ENCODE measurements at regions of chr4 and their contacts with region 1.

Region 1: GRCh38 chr4:111641955-111642579 is 503.2 kb upstream of the FAM241A start:
- DNase-seq: peak; percentile 52
- H3K4me3 ChIP-seq: no peak overlapping the region
- H3K27ac ChIP-seq: no peak overlapping the region
- H3K4me1 ChIP-seq: no peaks in the 10 kb centered on the region
- H3K27me3 ChIP-seq: no peaks in the 10 kb centered on the region
- CTCF ChIP-seq: peak; percentile 67 to 76 (median 72)
- EP300 ChIP-seq: no peak
- POLR2A ChIP-seq: no peak

Region 2: GRCh38 chr4:110631584-110632505 is 1010.2 kb before region 1 on chr4:
- in situ Hi-C with region 1: loop called in 1 of 4 experiments (anchors 25 kb)
- intact Hi-C with region 1: no loop called
- DNase-seq: peak; percentile 70
- H3K4me3 ChIP-seq: peak overlapping the region in 2 of 4 donors; percentile 6 to 38
- H3K27ac ChIP-seq: no peak overlapping the region
- H3K4me1 ChIP-seq: peaks cover 0 to 33% (median 23%) of the 10 kb centered on the region in 4 donors
- H3K27me3 ChIP-seq: peaks cover 100% of the 10 kb centered on the region
- CTCF ChIP-seq: peak; percentile 54 to 93 (median 69)
- EP300 ChIP-seq: no peak
- POLR2A ChIP-seq: no peak

Region 3: DNA sequence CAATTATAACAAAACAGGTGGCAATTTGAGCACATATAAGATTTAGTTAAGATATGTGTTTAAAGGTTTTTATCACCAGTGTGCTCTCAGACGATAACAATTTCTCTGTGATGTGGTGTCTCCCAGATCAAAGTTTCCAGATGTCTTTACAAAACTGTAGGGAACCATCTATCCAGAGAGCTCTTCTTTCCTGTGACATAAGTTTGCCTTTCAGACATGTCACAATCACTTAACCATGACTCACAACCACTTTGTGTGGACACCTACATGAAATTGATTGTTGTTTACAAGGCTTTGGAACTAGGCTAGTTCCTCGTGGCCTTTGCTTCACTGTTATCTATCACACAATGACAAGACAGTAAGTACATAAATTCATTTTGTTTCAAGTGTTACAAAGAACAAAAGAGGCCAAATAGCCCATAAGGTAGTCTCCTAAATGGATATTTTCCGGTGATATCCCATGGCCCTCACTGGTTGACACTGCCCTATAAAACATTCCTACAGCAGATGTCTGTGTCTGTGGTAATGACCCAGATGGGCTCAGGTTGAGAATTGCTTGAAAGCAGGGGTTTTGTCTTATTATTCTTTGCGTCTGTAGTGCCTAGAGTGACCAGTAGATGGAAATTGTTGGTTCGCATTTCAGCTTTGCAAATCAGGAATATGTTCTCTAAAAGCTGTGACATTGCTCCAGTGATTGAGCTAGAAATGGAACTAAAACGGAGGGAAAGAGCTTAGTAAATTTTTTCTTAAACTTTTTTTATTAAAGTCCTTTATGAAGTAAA is 205.4 kb after region 1 on chr4:
- in situ Hi-C with region 1: loop called in 3 of 4 experiments (anchors 10 to 25 kb)
- intact Hi-C with region 1: loop called (anchors 2 kb)
- DNase-seq: no peak
- H3K4me3 ChIP-seq: no peak overlapping the region
- H3K27ac ChIP-seq: no peak overlapping the region
- H3K4me1 ChIP-seq: no peaks in the 10 kb centered on the region
- H3K27me3 ChIP-seq: no peaks in the 10 kb centered on the region
- CTCF ChIP-seq: no peak
- EP300 ChIP-seq: no peak
- POLR2A ChIP-seq: no peak

Region 4: DNA sequence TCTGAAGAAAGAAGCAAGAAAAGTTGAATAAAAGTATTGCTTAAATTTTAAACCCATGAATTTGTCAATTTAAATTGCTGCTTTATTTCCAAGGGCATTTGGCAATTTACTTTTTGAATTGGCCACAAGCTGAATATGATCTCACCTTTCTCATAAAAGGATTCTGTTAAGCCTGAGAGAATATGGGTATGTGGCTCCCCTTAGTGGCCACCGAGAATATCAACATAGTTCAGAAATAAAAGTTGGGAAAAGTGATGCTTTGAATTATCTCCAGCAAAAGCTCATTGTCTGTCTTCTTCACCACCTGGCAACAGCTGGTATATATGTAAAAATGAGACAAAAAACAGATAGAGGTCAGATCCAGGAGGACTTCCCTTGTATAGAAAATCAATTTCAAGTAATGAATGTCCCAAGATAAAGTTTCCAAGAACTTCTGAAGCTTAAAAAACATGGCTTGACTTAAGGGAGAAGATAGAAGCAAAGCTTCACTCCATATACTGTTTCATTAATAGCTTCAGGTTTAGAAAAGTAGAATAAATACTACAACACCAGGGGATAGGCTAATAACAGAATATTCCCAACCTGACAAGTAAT is 212.5 kb after region 1 on chr4:
- in situ Hi-C with region 1: loop called in 3 of 4 experiments (anchors 10 to 25 kb)
- intact Hi-C with region 1: no loop called
- DNase-seq: peak; percentile 11
- H3K4me3 ChIP-seq: no peak overlapping the region
- H3K27ac ChIP-seq: no peak overlapping the region
- H3K4me1 ChIP-seq: peaks cover 0 to 4% (median 0%) of the 10 kb centered on the region in 4 donors
- H3K27me3 ChIP-seq: no peaks in the 10 kb centered on the region
- CTCF ChIP-seq: peak; percentile 48 to 69 (median 57)
- EP300 ChIP-seq: no peak
- POLR2A ChIP-seq: no peak

Region 5: DNA sequence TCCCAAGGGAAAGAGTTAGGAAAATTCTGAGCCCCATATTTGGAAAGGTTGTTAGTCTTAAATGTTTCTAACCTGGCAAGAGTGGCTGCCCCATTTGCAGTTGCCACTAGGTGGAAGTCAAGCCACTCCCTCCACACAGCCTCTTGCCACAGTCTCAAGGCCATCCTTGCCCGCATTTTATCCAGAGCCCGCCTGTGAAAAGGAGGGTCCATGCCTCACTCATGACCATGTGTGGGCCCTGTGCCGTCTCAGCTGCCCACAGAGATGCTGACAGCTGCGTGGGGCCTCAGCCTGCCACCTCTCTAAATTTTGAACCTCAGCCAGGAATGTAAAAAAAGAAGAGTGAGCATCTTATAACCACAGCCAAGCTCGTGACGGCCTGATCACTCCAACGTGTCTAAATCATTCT is 301.7 kb after region 1 on chr4:
- in situ Hi-C with region 1: loop called in 2 of 4 experiments (anchors 10 to 25 kb)
- intact Hi-C with region 1: no loop called
- DNase-seq: peak; percentile 61
- H3K4me3 ChIP-seq: no peak overlapping the region
- H3K27ac ChIP-seq: no peak overlapping the region
- H3K4me1 ChIP-seq: no peaks in the 10 kb centered on the region
- H3K27me3 ChIP-seq: no peaks in the 10 kb centered on the region
- CTCF ChIP-seq: peak; percentile 53 to 80 (median 60)
- EP300 ChIP-seq: no peak
- POLR2A ChIP-seq: no peak

Region 6: DNA sequence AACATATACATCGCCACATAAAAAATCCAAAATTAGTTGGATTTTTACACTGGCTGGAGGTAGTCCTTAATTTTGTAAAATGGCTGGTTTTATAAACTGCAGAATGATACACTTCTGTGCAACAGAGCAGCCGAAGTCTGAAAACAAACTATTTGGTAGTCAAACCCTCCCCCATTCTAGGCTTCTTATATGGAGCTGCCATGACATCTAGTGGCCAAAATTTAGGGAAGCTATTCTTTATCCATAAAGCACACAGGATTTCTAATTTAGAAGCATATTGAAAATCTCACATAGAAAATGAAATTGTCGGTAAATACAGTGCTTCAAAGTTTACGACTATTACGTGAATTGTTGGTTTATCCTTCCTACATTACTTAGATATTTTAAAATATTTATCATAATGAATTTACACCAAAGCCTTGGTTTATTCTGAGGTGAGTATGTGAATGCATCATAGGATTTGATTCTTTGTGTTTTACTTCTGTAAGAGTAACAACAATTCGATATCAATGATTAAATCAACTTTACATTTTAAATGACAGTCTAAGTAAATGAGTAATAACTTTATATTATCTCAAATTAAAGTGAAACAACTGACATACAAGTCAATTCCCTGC is 389.8 kb after region 1 on chr4:
- in situ Hi-C with region 1: loop called (anchors 10 to 25 kb)
- intact Hi-C with region 1: no loop called
- DNase-seq: peak; percentile 16
- H3K4me3 ChIP-seq: no peak overlapping the region
- H3K27ac ChIP-seq: no peak overlapping the region
- H3K4me1 ChIP-seq: peaks cover 0 to 6% (median 0%) of the 10 kb centered on the region in 4 donors
- H3K27me3 ChIP-seq: peaks cover 12% of the 10 kb centered on the region
- CTCF ChIP-seq: peak; percentile 55 to 79 (median 64)
- EP300 ChIP-seq: no peak
- POLR2A ChIP-seq: no peak

Measured in transverse colon (tissue), 4 donors.